Activated CD4-positive, alpha-beta memory T cell treated with anti-CD3 and anti-CD28 coated beads, Interleukin-2, amount 10 ng/mL, durations not matched to agents 7 days and 5 days (primary cell): ENCODE measurements at regions of chr16 and their contacts with region 1.

Region 1: GRCh38 chr16:56931892-56932720 is at the start of gene HERPUD1:
- DNase-seq: peak; percentile 99
- H3K4me3 Mint-ChIP-seq: peak within 1 kb of the TSS; percentile 98
- H3K27ac Mint-ChIP-seq: peak within 1 kb of the TSS; percentile 96
- H3K4me1 Mint-ChIP-seq: peaks cover 38% of the 10 kb centered on the region
- H3K27me3 Mint-ChIP-seq: peaks cover 2% of the 10 kb centered on the region
- total RNA-seq, gene HERPUD1: 166 to 171 TPM

Region 2: DNA sequence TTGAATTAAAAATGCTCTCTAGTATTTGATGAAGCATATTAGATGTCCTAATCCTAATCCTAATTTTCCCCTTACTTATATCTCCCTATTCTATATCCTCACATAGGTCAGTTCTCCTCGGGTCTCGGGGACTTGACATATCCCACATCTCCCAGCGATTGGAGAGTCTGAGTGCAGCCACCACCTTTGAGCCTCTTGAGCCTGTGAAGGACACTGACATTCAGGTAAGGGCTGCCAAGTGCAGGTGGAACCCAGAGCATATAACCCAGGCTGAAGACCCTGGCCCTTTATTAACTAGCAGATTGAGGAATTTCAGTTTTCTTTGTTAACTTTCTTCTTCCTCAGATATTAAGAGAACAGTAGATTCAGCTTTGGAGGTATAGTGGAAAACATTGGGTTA is 173.7 kb before region 1 on chr16:
- CTCF ChIA-PET with region 1: no interaction called
- POLR2A ChIA-PET with region 1: no interaction called
- DNase-seq: no peak
- H3K4me3 Mint-ChIP-seq: no peak overlapping the region
- H3K27ac Mint-ChIP-seq: no peak overlapping the region
- H3K4me1 Mint-ChIP-seq: peaks cover 11% of the 10 kb centered on the region
- H3K27me3 Mint-ChIP-seq: no peaks in the 10 kb centered on the region

Region 3: GRCh38 chr16:56860226-56861020 is 71.7 kb before region 1 on chr16:
- CTCF ChIA-PET with region 1: no interaction called
- POLR2A ChIA-PET with region 1: interaction called, 67 read pairs
- DNase-seq: peak; percentile 77
- H3K4me3 Mint-ChIP-seq: peak overlapping the region; percentile 65
- H3K27ac Mint-ChIP-seq: peak overlapping the region; percentile 92
- H3K4me1 Mint-ChIP-seq: peaks cover 50% of the 10 kb centered on the region
- H3K27me3 Mint-ChIP-seq: no peaks in the 10 kb centered on the region

Region 4: DNA sequence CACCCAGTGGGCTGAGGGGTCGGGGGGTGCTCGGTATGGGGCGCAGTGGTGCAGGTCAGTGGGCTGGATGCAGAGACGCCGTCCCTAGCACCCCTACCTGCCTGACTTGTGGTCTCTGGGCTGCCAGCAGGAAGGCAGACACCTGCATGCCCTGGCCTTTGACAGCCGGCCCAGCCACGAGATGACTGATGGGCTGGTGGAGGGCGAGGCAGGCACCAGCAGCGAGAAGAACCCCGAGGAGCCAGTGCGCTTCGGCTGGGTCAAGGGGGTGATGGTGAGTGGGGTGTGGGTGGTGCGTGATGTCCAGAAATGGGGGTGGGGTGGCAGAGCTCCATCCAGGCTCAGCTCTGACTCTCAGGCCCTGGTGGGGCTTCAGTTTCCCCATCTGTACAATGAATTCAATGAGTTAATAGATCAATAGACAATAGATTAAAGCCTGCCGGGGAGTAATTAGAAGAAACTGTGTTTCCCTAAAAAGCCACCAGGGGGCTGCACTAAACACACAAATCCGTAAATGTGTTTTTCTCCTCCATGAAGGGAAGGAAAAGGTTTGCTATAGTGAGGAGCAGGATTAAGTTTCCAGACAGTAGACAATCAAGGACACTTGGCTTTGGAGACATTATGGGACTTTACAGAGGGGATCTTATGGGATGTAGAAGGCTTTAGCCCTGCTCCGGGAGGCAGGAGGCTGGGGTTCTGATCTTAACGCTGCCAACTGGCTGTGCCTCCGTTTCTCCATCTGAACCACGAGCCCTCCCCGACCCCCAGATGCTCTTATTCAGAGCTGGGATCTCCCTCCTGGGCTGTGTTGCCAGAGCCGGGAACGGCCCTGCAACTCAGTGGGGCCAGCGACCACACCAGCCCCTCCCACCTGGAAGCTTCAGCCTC is 64.9 kb before region 1 on chr16:
- CTCF ChIA-PET with region 1: interaction called, 3 read pairs
- POLR2A ChIA-PET with region 1: interaction called, 67 read pairs
- DNase-seq: peak; percentile 45
- H3K4me3 Mint-ChIP-seq: no peak overlapping the region
- H3K27ac Mint-ChIP-seq: no peak overlapping the region
- H3K4me1 Mint-ChIP-seq: peaks cover 16% of the 10 kb centered on the region
- H3K27me3 Mint-ChIP-seq: no peaks in the 10 kb centered on the region

Region 5: DNA sequence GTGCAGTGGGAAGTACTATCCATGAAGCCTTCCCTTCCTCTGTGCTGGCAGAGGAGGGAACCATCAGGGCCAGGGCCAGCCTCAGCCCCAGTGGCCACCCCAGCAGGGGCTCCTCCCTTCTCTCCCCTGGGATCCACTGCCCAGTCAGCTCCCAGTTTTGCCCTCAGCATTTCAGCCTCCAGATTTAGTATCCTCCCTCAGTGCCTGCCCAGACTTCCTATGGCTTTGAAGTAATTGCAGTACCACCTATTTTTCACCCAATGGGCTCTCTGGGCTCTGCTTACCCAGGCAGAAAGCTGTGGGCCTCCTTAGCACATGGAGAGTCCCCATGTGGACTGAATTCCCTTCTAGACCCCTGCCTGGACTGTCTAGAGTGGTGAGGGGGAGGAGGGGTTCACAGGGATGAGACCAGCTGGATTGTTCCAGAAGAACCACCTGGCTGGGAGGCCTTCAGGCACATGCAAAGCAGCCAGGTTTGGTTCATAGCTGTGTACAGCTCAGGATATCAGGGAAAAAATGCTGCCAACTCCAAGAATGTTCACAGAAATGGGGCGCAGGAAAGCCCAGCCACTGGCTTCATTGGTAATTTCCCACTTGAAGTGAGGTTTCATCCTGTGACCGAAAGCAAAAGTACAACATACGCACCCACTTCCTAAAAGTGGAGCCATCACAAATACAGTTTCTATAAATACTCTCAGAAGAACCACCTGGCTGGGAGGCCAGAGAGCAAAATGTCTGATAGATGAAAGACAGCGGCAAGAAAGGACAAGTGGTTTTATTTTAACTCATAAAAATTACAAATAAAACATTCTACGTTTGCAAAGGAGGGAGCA is 15.3 kb before region 1 on chr16:
- CTCF ChIA-PET with region 1: interaction called, 6 read pairs
- POLR2A ChIA-PET with region 1: interaction called, 100 read pairs
- DNase-seq: peak; percentile 45
- H3K4me3 Mint-ChIP-seq: no peak overlapping the region
- H3K27ac Mint-ChIP-seq: peak overlapping the region; percentile 60
- H3K4me1 Mint-ChIP-seq: peaks cover 32% of the 10 kb centered on the region
- H3K27me3 Mint-ChIP-seq: peaks cover 4% of the 10 kb centered on the region

Region 6: DNA sequence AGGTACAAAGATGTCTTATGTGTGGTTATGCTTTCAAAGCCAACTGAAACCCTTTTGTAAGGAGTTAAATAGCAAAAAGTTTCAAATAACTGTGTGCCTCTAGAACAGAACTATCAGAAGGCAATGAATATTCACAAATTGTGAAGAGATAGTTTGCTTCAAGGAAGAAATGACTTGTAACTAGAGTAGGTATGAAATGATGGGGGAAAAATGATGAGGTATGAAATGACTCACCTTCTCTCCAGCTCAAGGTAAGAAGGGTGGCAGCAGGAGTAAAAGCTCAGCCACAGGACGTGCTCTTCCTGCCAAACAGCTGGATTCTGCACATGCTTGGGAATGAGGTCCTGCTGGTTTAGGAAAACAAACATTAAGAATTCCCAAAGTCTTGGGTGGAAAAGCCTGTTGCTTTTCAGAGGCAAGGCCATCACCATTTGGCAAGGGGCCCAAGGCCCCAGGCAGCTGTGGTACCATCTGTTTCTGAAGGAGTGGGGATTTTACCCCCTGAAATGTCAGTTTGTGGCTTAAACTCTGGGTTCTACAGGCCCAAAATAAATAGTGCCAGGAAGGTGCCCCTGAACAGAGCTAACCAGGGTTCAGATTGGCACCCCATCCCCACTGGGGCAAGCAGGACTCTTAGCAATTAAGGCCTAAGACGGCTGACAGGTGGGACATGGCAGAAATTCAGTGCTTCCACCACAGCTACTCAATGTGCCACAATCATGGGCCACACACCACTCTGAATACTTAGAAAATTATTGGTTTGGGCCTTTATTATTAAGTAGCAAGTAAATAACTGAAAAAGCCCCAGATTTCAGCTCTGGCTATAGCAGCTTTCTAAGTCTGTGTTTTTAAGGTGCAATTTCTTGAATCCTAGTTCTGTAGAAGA is 13.1 kb after region 1 on chr16:
- CTCF ChIA-PET with region 1: interaction called, 3 read pairs
- POLR2A ChIA-PET with region 1: interaction called, 140 read pairs
- DNase-seq: no peak
- H3K4me3 Mint-ChIP-seq: no peak overlapping the region
- H3K27ac Mint-ChIP-seq: peak overlapping the region; percentile 69
- H3K4me1 Mint-ChIP-seq: peaks cover 49% of the 10 kb centered on the region
- H3K27me3 Mint-ChIP-seq: no peaks in the 10 kb centered on the region

Region 7: GRCh38 chr16:56950881-56951771 is 19.0 kb after region 1 on chr16:
- CTCF ChIA-PET with region 1: interaction called, 3 read pairs
- POLR2A ChIA-PET with region 1: interaction called, 140 read pairs
- DNase-seq: peak; percentile 66
- H3K4me3 Mint-ChIP-seq: no peak overlapping the region
- H3K27ac Mint-ChIP-seq: no peak overlapping the region
- H3K4me1 Mint-ChIP-seq: peaks cover 20% of the 10 kb centered on the region
- H3K27me3 Mint-ChIP-seq: no peaks in the 10 kb centered on the region